ENCODE measurements at regions of chr3 and their contacts with region 1.

Region 1: GRCh38 chr3:94928907-94929362 is 866.1 kb downstream of the NSUN3 start:
- DNase-seq: peak; percentile 51 to 81
- H3K4me3 ChIP-seq: no peak overlapping the region
- H3K27ac ChIP-seq: no peak overlapping the region
- H3K4me1 ChIP-seq: no peaks in the 10 kb centered on the region
- H3K27me3 ChIP-seq: no peaks in the 10 kb centered on the region
- CTCF ChIP-seq: no peak

Region 2: GRCh38 chr3:94946683-94947082 is 17.7 kb after region 1 on chr3:
- CTCF ChIA-PET with region 1: interaction called, 11 read pairs
- POLR2A ChIA-PET with region 1: no interaction called
- intact Hi-C with region 1: no loop called
- DNase-seq: no peak
- H3K4me3 ChIP-seq: no peak overlapping the region
- H3K27ac ChIP-seq: no peak overlapping the region
- H3K4me1 ChIP-seq: no peaks in the 10 kb centered on the region
- H3K27me3 ChIP-seq: no peaks in the 10 kb centered on the region
- CTCF ChIP-seq: no peak

Measured in PC-9 (cell line).